Colonic mucosa (tissue), 4 donors: ENCODE measurements at regions of chr21 and their contacts with region 1.

Region 1: DNA sequence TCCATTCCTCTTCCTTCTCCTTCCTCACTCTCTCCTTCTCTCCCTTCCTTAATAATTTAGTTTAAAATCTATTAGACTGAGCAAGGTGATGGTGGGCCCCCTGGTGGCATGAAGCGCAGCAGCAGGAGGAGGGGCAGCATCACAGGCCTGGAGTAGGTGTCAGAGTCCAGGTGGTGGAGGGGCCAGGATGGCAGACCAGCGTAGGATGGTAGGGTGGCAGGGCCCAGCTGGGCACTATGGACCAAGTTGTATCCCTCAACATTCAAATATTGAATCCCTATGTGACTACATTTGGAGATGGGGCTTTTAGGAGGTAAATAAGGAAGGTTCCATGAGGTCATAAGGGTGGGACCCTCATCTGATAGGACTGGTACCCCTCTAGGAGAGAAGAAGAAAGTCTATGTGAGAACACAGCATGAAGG is 61.0 kb downstream of the WDR4 start:
- DNase-seq: peak; percentile 65
- H3K4me3 ChIP-seq: no peak overlapping the region
- H3K27ac ChIP-seq: no peak overlapping the region
- H3K4me1 ChIP-seq: no peaks in the 10 kb centered on the region
- H3K27me3 ChIP-seq: no peaks in the 10 kb centered on the region
- CTCF ChIP-seq: peak; percentile 84

Region 2: GRCh38 chr21:42593007-42593806 is 225.1 kb before region 1 on chr21:
- intact Hi-C with region 1: loop called (anchors 5 kb)
- DNase-seq: peak; percentile 84
- H3K4me3 ChIP-seq: no peak overlapping the region
- H3K27ac ChIP-seq: no peak overlapping the region
- H3K4me1 ChIP-seq: peaks cover 6% of the 10 kb centered on the region
- H3K27me3 ChIP-seq: no peaks in the 10 kb centered on the region
- CTCF ChIP-seq: peak; percentile 81

Region 3: GRCh38 chr21:42652527-42653230 is 165.7 kb before region 1 on chr21:
- intact Hi-C with region 1: loop called (anchors 10 kb)
- DNase-seq: peak; percentile 53
- H3K4me3 ChIP-seq: peak overlapping the region; percentile 19
- H3K27ac ChIP-seq: peak overlapping the region; percentile 27
- H3K4me1 ChIP-seq: peaks cover 14% of the 10 kb centered on the region
- H3K27me3 ChIP-seq: no peaks in the 10 kb centered on the region
- CTCF ChIP-seq: peak; percentile 18

Region 4: DNA sequence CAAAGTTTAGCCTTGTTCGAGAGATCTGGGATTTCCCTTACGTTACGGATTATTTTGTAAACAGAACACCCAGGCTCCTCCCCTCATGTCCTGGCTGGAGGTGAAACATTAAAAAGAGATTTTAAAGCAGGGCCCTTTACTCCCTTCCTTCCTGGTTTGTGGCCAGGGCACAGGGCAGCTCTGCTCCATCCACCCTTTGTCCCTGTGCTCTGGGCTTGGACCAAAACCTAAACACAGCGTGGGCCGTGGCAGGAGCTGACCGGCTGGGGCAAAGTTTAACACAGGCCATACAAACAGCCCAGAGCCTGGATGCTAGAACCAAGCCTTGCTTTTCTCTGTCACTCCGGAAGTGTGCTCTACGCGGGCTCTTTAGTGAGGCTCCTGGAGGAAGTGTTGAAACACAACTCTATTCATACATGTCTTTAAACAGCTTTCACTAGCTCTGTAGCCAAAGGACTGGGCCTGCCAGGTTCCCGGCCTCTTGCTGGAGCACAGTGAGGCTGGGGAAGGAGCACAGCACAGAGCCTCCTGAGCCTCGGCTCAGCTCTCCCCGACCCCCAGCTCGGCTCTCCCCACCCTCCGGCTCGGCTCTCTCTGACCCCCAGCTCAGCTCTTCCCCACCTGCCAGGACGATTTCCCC is 80.3 kb before region 1 on chr21:
- intact Hi-C with region 1: loop called (anchors 10 kb)
- DNase-seq: peak; percentile 84
- H3K4me3 ChIP-seq: no peak overlapping the region
- H3K27ac ChIP-seq: peak overlapping the region; percentile 93
- H3K4me1 ChIP-seq: peaks cover 19% of the 10 kb centered on the region
- H3K27me3 ChIP-seq: no peaks in the 10 kb centered on the region
- CTCF ChIP-seq: no peak